ENCODE measurements at regions of chr2 and their contacts with region 1.

Region 1: DNA sequence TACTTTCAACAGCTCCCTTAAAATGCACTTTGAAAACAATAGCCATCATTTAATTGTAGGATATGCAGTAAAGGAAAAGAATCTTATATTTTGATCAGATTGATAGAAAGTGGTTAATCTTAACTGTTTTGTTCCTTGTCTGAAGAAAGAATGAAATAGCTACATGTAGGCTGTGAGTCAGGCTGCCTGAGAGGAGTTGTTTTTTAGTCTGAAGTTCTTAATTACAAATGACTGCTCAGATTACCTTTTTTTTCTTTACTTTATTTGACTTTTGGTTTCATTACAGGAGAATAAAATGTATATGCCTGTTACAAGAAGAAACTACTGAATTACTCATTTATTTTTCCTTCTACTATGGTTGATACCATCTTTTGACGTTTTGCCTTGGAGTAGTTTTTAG is 56.8 kb downstream of the AGFG1 start:
- DNase-seq: no peak
- ATAC-seq: no peak
- H3K4me3 ChIP-seq: no peak overlapping the region
- H3K4me3 Mint-ChIP-seq: no peak overlapping the region
- H3K27ac ChIP-seq: no peak overlapping the region
- H3K27ac Mint-ChIP-seq: peak overlapping the region in 4 of 9 donors; percentile 1 to 61 (median 12)
- H3K4me1 ChIP-seq: no peaks in the 10 kb centered on the region
- H3K4me1 Mint-ChIP-seq: peaks cover 0 to 17% (median 5%) of the 10 kb centered on the region in 7 donors
- H3K27me3 ChIP-seq: no peaks in the 10 kb centered on the region
- H3K27me3 Mint-ChIP-seq: no peaks in the 10 kb centered on the region

Region 2: DNA sequence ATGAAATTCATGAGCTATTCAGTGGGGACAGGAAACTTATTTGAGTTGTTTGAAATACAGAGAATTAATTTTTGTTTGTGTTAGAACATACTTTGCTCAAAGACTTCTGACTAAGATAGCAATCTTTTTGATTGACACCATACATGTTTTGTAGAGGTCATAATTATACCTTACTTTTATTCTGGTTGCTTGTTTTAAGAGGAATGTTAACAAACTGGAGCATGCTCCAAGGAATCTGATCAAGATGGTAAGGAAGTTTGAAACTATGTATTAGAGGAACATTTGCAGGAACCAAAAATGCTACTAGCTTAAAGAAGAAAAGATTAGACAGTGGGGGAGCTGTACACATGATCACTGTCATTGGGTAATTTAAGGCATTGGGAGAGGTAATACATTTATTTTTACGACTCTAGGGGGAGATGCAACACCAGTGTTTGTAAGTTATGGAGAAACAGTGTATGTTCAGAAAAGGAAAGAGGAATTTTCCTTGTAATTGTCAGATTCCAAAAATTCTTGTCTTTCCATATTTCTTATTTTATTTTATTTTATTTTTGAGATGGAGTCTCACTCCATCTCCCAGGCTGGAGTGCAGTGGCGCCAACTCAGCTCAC is 48.8 kb before region 1 on chr2:
- CTCF ChIA-PET with region 1: interaction called, 4 read pairs
- POLR2A ChIA-PET with region 1: no interaction called
- intact Hi-C with region 1: loop called in 1 of 2 experiments (anchors 5 kb)
- DNase-seq: peak in 2 of 9 donors; percentile 12 to 14
- ATAC-seq: peak; percentile 71
- H3K4me3 ChIP-seq: no peak overlapping the region
- H3K4me3 Mint-ChIP-seq: peak overlapping the region in 8 of 10 donors; percentile 7 to 59 (median 32)
- H3K27ac ChIP-seq: peak overlapping the region; percentile 2
- H3K27ac Mint-ChIP-seq: peak overlapping the region; percentile 0 to 85 (median 26)
- H3K4me1 ChIP-seq: peaks cover 28 to 31% of the 10 kb centered on the region in 2 donors
- H3K4me1 Mint-ChIP-seq: peaks cover 44 to 98% (median 68%) of the 10 kb centered on the region in 7 donors
- H3K27me3 ChIP-seq: no peaks in the 10 kb centered on the region
- H3K27me3 Mint-ChIP-seq: no peaks in the 10 kb centered on the region

Measured in naive thymus-derived CD4-positive, alpha-beta T cell (primary cell).